Activated B cell treated with CpG ODN at 0.5 μM for 24 hours (primary cell): ENCODE measurements at regions of chr6 and their contacts with region 1.

Region 1: DNA sequence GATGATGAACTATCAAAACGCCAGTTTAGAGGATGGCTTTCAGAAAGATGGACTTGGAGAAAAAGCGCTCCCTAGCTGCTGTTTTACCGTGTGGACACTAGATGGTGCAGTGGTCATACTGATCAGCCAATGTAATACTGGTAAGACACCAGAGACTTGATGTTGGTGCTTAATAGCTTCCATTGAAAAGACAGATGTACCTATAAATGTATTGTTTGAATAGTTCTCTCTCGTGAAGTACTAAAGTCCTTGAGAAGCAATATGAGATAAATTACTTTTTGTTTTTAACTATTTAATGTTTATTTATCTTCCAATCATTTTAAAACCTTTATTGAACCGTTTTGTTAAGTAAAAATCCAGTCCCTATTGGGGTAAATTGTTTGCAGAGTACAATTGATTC is 63.9 kb upstream of the FUCA2 start:
- DNase-seq: no peak
- ATAC-seq: peak; percentile 99
- H3K4me3 Mint-ChIP-seq: no peak overlapping the region
- H3K27ac Mint-ChIP-seq: no peak overlapping the region
- H3K4me1 Mint-ChIP-seq: no peaks in the 10 kb centered on the region
- H3K27me3 Mint-ChIP-seq: no peaks in the 10 kb centered on the region
- CTCF ChIP-seq: peak; percentile 26

Region 2: DNA sequence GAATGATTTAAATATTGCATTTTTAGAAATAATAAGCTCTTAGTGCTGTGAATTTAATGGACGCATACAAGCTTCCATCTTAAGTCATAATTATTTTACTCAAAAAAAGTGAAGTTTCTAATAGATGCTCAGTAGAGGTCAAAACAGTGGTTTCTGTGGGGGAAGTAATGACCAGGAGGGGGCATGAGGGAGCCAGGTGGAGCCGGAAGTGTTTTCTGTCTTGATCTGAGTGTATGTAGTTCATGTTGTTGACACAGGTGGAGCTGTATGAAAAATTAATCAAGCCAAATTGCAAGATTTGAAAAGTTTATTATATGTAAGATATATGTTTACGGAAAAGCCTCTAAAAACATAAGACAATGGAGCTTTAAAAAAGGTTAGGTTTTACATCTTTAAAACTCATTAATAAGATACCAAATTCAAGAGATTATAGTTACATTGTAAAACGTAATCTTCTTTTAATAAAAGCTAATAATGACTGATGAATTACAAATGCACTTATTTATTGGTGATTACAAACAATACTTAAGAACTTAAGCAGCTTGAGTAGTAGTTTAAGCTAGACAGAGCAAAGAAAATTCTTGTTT is 364.7 kb after region 1 on chr6:
- CTCF ChIA-PET with region 1: interaction called, 9 read pairs
- POLR2A ChIA-PET with region 1: no interaction called
- intact Hi-C with region 1: loop called (anchors 1 kb)
- DNase-seq: no peak
- ATAC-seq: peak; percentile 98
- H3K4me3 Mint-ChIP-seq: no peak overlapping the region
- H3K27ac Mint-ChIP-seq: no peak overlapping the region
- H3K4me1 Mint-ChIP-seq: no peaks in the 10 kb centered on the region
- H3K27me3 Mint-ChIP-seq: no peaks in the 10 kb centered on the region
- CTCF ChIP-seq: no peak

Region 3: DNA sequence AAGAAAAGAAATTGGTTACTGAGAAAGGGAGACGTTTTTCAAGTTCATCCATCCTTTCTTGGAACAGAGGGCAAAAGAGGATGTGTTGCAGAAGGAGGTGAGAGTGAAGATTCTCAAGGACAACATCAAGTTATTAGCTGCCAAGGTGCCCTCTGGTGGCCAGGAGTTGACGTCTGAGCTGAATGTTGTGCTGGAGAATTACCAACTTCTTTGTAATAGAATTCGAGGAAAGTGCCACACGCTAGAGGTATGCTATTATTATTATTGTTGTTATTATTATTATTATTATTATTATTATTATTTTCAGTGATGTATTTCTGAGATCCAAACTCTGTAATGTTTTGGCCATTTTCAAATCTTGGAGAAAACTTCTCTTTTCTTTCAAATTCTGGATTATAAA is 906.7 kb after region 1 on chr6:
- CTCF ChIA-PET with region 1: interaction called, 14 read pairs
- POLR2A ChIA-PET with region 1: no interaction called
- intact Hi-C with region 1: loop called (anchors 1 kb)
- DNase-seq: peak; percentile 39
- ATAC-seq: peak; percentile 91
- H3K4me3 Mint-ChIP-seq: no peak overlapping the region
- H3K27ac Mint-ChIP-seq: peak overlapping the region; percentile 41
- H3K4me1 Mint-ChIP-seq: no peaks in the 10 kb centered on the region
- H3K27me3 Mint-ChIP-seq: no peaks in the 10 kb centered on the region
- CTCF ChIP-seq: no peak

Region 4: DNA sequence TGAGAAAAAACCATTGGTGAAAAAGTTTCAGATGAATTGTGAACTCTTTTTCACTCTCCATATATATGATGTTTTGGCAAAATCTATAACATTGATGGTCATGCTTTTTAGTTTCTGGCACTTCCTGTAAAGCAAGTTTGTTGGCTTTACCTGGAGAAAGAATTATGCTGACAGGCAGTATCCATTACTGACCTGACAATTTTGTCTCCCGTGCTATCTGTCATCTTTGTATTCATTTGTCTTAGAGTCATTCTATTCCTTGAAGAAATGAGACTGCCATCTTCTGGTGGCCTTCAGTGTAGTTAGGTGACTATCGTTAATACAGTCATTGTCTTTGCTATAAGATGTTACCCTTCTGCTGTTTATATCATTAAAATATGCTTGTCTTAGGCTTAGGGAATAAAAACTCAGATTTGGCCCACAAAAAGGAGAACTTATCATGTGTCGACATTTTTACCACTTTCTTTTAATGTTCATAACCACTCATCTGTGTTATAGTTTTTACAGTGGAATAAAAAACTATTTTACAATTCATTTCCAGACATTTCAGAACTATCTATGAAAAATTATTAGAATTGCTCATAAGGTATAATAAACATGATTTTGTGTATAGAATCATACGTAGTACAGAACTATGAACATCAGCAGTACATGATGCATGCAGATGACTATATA is 1452.8 kb after region 1 on chr6:
- CTCF ChIA-PET with region 1: no interaction called
- POLR2A ChIA-PET with region 1: no interaction called
- intact Hi-C with region 1: loop called (anchors 2 kb)
- DNase-seq: no peak
- ATAC-seq: no peak
- H3K4me3 Mint-ChIP-seq: no peak overlapping the region
- H3K27ac Mint-ChIP-seq: no peak overlapping the region
- H3K4me1 Mint-ChIP-seq: no peaks in the 10 kb centered on the region
- H3K27me3 Mint-ChIP-seq: peaks cover 5% of the 10 kb centered on the region
- CTCF ChIP-seq: no peak